CD4-positive, alpha-beta T cell (primary cell): ENCODE measurements at regions of chr6 and their contacts with region 1.

Region 1: GRCh38 chr6:111087106-111087835 is at the start of gene SLC16A10:
- DNase-seq: peak; percentile 63 to 93 (median 82)
- ATAC-seq: peak; percentile 83
- H3K4me3 ChIP-seq: peak within 1 kb of the TSS; percentile 60
- H3K4me3 Mint-ChIP-seq: peak within 1 kb of the TSS; percentile 95
- H3K27ac ChIP-seq: peak within 1 kb of the TSS; percentile 40 to 53
- H3K27ac Mint-ChIP-seq: peak within 1 kb of the TSS; percentile 92
- H3K4me1 ChIP-seq: no peaks in the 10 kb centered on the region
- H3K4me1 Mint-ChIP-seq: peaks cover 48% of the 10 kb centered on the region
- H3K27me3 ChIP-seq: no peaks in the 10 kb centered on the region
- H3K27me3 Mint-ChIP-seq: no peaks in the 10 kb centered on the region
- CTCF ChIP-seq: no peak
- total RNA-seq, gene SLC16A10: 13.4 to 13.8 TPM

Region 2: DNA sequence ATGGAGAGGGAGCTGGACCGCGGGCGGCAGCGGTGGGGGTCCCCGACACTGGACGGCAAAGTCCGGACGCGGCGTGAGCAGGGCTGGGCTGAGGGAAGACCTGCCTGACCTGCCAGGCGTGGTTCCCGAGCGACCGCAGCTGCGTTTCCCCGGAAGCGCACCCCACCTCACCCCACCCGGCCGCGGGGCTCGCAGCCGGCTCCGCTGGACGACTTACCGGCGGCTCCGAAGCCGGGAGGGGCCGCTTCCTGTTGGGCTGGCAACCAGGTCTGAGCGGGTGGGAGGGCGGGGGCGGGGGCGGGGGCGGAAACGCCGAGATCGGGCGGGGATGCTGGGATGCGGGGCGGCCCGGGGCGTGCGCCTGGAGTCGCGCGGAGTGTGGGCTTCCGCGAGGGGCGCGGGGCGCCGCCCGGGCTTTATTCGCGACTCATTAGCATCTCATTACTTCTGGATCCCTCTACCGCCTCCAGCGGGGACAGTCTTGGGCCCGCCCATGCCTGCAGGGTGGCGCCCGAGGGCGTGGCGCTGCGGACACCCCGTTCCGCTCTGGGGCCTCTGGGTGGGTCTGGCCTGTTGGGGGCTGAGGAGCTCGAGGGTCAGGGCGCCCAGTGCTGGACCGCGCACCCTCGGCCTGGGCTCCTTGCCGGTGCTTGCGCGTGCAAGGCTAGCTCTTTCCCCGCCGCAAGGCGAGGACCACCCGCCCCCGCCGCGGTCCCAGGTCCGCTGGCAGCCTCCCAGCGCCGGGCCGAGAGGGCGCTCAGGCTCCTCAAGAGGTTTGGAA is 1631.6 kb before region 1 on chr6 and contains the start of gene MICAL1:
- CTCF ChIA-PET with region 1: no interaction called
- POLR2A ChIA-PET with region 1: no interaction called
- intact Hi-C with region 1: loop called in 1 of 2 experiments (anchors 10 kb)
- DNase-seq: peak; percentile 45 to 92 (median 70)
- ATAC-seq: peak; percentile 58
- H3K4me3 ChIP-seq: peak within 1 kb of the TSS; percentile 97
- H3K4me3 Mint-ChIP-seq: peak within 1 kb of the TSS; percentile 99
- H3K27ac ChIP-seq: peak within 1 kb of the TSS; percentile 91 to 94
- H3K27ac Mint-ChIP-seq: peak within 1 kb of the TSS; percentile 95
- H3K4me1 ChIP-seq: peaks cover 74% of the 10 kb centered on the region
- H3K4me1 Mint-ChIP-seq: peaks cover 66% of the 10 kb centered on the region
- H3K27me3 ChIP-seq: no peaks in the 10 kb centered on the region
- H3K27me3 Mint-ChIP-seq: no peaks in the 10 kb centered on the region
- CTCF ChIP-seq: no peak
- total RNA-seq, gene MICAL1: 106 to 107 TPM

Region 3: GRCh38 chr6:111068510-111069205 is 18.6 kb before region 1 on chr6:
- CTCF ChIA-PET with region 1: no interaction called
- POLR2A ChIA-PET with region 1: no interaction called
- intact Hi-C with region 1: no loop called
- DNase-seq: no peak
- ATAC-seq: no peak
- H3K4me3 ChIP-seq: no peak overlapping the region
- H3K4me3 Mint-ChIP-seq: no peak overlapping the region
- H3K27ac ChIP-seq: no peak overlapping the region
- H3K27ac Mint-ChIP-seq: no peak overlapping the region
- H3K4me1 ChIP-seq: no peaks in the 10 kb centered on the region
- H3K4me1 Mint-ChIP-seq: no peaks in the 10 kb centered on the region
- H3K27me3 ChIP-seq: no peaks in the 10 kb centered on the region
- H3K27me3 Mint-ChIP-seq: no peaks in the 10 kb centered on the region
- CTCF ChIP-seq: no peak

Region 4: DNA sequence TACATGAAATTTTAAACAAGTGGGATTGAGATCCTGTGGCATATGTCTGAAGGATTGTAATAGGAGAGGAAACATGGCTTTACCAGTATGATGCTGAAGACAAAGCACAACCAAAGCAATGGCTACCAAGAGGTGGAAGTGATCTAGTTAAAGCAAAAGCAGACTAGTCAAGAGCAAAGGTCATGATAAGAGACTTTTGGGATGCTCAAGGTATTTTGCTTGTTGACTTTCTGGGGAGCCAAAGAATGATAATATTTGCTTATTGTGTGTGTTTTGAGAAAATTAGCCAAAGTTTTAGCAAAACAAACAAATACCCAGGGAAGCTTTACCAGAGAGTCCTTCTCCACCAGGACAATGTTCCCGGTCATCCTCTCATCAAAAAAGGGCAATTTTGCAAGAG is 20.3 kb after region 1 on chr6:
- CTCF ChIA-PET with region 1: no interaction called
- POLR2A ChIA-PET with region 1: interaction called, 7 read pairs
- intact Hi-C with region 1: loop called in 1 of 2 experiments (anchors 2 kb)
- DNase-seq: no peak
- ATAC-seq: no peak
- H3K4me3 ChIP-seq: no peak overlapping the region
- H3K4me3 Mint-ChIP-seq: no peak overlapping the region
- H3K27ac ChIP-seq: no peak overlapping the region
- H3K27ac Mint-ChIP-seq: no peak overlapping the region
- H3K4me1 ChIP-seq: no peaks in the 10 kb centered on the region
- H3K4me1 Mint-ChIP-seq: peaks cover 44% of the 10 kb centered on the region
- H3K27me3 ChIP-seq: no peaks in the 10 kb centered on the region
- H3K27me3 Mint-ChIP-seq: no peaks in the 10 kb centered on the region
- CTCF ChIP-seq: no peak

Region 5: DNA sequence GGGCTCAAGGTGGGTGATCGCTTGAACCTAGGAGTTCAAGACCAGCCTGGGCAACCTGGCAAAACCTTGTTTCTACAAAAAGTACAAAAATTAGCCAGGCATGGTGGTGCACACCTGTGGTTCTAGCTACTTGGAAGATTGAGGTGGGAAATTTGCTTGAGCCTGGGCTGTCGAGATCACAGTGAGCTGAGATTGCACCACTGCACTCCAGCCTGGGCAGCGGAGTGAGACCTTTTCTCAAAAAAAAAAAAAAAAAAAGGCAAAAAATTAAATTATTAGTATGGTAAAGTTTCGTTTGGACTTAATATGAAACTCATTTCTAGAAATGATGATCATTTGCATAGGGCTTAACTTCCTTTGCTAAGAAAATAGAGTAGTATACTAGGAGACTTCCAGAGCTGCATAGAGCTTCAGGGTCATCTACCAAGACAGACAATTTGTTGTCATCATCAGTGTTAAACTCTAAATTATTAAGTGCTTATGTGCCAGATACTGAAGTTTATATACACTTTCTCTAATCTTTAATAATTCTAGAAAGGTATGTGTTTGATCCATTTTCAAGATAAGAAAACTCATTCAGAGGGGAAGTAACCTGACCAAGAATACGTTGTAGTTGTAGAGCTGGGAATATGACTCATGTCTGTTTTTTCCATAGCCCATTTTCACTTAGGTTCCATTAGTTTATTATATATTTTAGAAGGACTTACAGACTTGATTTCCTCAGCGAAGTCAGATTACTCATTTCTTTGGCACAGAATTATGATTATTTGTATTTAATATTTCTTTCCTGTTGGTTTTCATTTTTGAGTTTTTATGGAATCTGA is 84.5 kb after region 1 on chr6:
- CTCF ChIA-PET with region 1: no interaction called
- POLR2A ChIA-PET with region 1: interaction called, 3 read pairs
- intact Hi-C with region 1: loop called in 1 of 2 experiments (anchors 5 kb)
- DNase-seq: no peak
- ATAC-seq: no peak
- H3K4me3 ChIP-seq: no peak overlapping the region
- H3K4me3 Mint-ChIP-seq: no peak overlapping the region
- H3K27ac ChIP-seq: no peak overlapping the region
- H3K27ac Mint-ChIP-seq: no peak overlapping the region
- H3K4me1 ChIP-seq: peaks cover 11% of the 10 kb centered on the region
- H3K4me1 Mint-ChIP-seq: peaks cover 26% of the 10 kb centered on the region
- H3K27me3 ChIP-seq: no peaks in the 10 kb centered on the region
- H3K27me3 Mint-ChIP-seq: no peaks in the 10 kb centered on the region
- CTCF ChIP-seq: no peak

Region 6: GRCh38 chr6:111483736-111484632 is 396.7 kb after region 1 on chr6:
- CTCF ChIA-PET with region 1: no interaction called
- POLR2A ChIA-PET with region 1: no interaction called
- intact Hi-C with region 1: loop called in 1 of 2 experiments (anchors 10 kb)
- DNase-seq: peak in 9 of 14 experiments; percentile 51 to 95 (median 83)
- ATAC-seq: peak; percentile 55
- H3K4me3 ChIP-seq: peak overlapping the region; percentile 69
- H3K4me3 Mint-ChIP-seq: peak overlapping the region; percentile 99
- H3K27ac ChIP-seq: peak overlapping the region; percentile 97 to 98
- H3K27ac Mint-ChIP-seq: peak overlapping the region; percentile 98
- H3K4me1 ChIP-seq: peaks cover 30% of the 10 kb centered on the region
- H3K4me1 Mint-ChIP-seq: peaks cover 60% of the 10 kb centered on the region
- H3K27me3 ChIP-seq: no peaks in the 10 kb centered on the region
- H3K27me3 Mint-ChIP-seq: no peaks in the 10 kb centered on the region
- CTCF ChIP-seq: no peak